HepG2 (cell line): ENCODE measurements at regions of chr5 and their contacts with region 1.

Region 1: DNA sequence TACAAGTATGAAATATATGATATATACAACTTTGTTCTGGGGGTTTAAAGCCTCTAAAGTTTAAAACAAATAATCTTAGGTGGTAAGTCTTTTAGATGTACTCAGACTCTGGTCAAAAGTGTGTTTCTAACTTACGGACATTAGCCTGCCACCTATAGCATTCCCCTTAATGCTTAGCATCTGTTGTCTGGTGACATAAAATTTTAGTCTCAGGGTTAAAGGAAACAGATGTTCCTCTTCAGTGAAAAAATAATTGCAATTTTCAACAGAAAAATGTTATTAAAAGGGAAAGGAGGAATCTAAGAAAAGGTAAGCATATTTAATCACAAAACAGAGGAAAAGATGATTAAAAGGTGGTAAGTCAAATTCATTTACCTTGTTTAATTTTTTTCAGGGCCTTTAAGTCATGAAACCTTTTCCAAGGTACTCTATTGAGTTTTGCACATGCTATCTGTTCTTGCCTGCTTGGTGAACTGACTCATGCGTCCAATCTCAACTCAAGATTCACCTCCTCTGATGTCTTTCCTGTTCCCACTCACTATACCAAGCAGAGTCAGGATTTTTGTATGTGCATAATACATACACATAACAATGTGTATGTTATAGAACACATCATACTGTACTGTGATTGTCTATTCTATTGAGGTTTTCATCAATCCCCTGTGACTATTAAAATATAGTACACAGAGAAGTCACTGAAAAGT is 7.9 kb downstream of the TMEM167A start:
- DNase-seq: no peak
- ATAC-seq: no peak
- H3K4me3 ChIP-seq: no peak overlapping the region
- H3K27ac ChIP-seq: no peak overlapping the region
- H3K4me1 ChIP-seq: peaks cover 51% of the 10 kb centered on the region
- H3K27me3 ChIP-seq: no peaks in the 10 kb centered on the region
- CTCF ChIP-seq: no peak
- EP300 ChIP-seq: no peak
- POLR2A ChIP-seq: no peak
- RAD21 ChIP-seq: no peak

Region 2: DNA sequence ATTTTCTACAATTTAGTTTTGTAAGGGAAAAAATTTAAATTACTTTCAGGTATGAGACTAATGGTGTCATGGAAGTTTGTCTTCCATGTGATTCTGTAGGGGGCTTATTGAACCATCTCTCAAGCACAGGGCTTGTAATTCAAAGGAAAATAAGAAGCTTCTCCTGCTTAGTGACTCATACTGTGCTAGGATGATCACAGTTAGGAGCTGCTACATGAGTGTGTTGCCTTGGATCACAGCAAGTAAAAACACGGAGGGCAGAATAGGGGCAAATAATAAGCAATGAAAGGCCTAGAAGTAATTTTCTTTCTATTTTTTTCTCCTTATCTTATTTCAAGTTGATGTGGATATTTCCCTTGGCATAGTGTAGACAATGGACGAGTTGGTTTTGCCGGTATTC is 21.0 kb before region 1 on chr5:
- CTCF ChIA-PET with region 1: no interaction called
- POLR2A ChIA-PET with region 1: no interaction called
- in situ Hi-C with region 1: no loop called
- intact Hi-C with region 1: loop called (anchors 1 kb)
- DNase-seq: no peak
- ATAC-seq: no peak
- H3K4me3 ChIP-seq: no peak overlapping the region
- H3K27ac ChIP-seq: no peak overlapping the region
- H3K4me1 ChIP-seq: 0 out of 2 replicates have a peak, but pooled peaks cover under 1% of the 10 kb centered on the region
- H3K27me3 ChIP-seq: no peaks in the 10 kb centered on the region
- CTCF ChIP-seq: no peak
- EP300 ChIP-seq: no peak
- POLR2A ChIP-seq: no peak
- RAD21 ChIP-seq: no peak

Region 3: GRCh38 chr5:83151821-83152220 is 82.6 kb after region 1 on chr5:
- CTCF ChIA-PET with region 1: no interaction called
- POLR2A ChIA-PET with region 1: no interaction called
- in situ Hi-C with region 1: no loop called
- intact Hi-C with region 1: no loop called
- DNase-seq: no peak
- ATAC-seq: no peak
- H3K4me3 ChIP-seq: no peak overlapping the region
- H3K27ac ChIP-seq: no peak overlapping the region
- H3K4me1 ChIP-seq: no peaks in the 10 kb centered on the region
- H3K27me3 ChIP-seq: no peaks in the 10 kb centered on the region
- CTCF ChIP-seq: no peak
- EP300 ChIP-seq: no peak
- POLR2A ChIP-seq: no peak
- RAD21 ChIP-seq: no peak

Region 4: DNA sequence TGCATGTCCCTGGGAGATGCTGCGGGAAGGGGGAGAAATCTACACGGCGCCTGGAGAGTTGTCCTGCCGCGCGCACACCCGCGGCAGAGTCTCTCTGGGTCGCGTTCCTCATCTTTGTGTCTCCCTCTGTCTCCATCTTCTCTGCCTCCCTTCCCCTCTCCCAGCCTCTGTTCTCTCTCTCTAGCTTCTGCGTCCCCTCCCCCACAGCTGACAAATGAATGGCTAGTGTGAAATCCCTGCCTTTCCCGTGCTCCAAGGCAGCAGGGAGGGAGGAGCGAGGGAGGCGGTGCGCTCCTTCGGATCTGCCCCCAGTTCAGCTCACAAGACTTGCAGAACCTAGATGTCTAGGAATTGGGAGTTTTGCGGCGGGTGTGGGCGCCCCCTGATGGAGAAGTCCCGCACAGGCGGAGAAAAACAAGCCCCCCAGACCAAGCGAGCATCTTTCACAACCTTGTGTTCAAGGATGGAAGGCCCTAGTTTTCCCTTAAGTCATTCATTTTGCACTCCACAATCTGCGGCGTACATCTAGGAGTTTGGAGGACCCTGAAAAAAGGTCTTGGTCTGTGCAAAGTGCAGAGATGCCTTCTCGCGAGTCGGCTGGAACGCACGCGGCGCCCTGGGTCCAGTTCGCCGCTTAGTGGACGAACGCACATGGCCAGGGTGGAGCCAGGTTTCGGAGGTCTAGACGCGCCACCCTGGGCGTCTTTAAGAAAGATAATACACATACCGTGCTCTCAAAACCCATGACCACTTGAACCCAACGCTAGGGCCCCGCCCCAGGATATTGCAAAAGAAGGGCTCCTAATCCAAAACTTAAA is 404.3 kb after region 1 on chr5:
- CTCF ChIA-PET with region 1: no interaction called
- POLR2A ChIA-PET with region 1: no interaction called
- in situ Hi-C with region 1: no loop called
- intact Hi-C with region 1: loop called (anchors 10 kb)
- DNase-seq: no peak
- ATAC-seq: peak; percentile 67
- H3K4me3 ChIP-seq: peak overlapping the region; percentile 36 to 68 (median 46); a peak in 5 of 6 replicates
- H3K27ac ChIP-seq: no peak overlapping the region
- H3K4me1 ChIP-seq: peaks cover 71% of the 10 kb centered on the region
- H3K27me3 ChIP-seq: peaks cover 3 to 43% of the 10 kb centered on the region in 2 experiments; a peak in 4 of 5 replicates
- CTCF ChIP-seq: peak; percentile 80
- EP300 ChIP-seq: no peak
- POLR2A ChIP-seq: no peak
- RAD21 ChIP-seq: peak; percentile 57; the same call in 1 of the 2 replicates